ENCODE measurements at regions of chr15 and their contacts with region 1.

Region 1: GRCh38 chr15:75208501-75209288 is 7.0 kb downstream of the C15orf39 start:
- DNase-seq: no peak
- ATAC-seq: no peak
- H3K4me3 ChIP-seq: peak overlapping the region; percentile 60
- H3K27ac ChIP-seq: no peak overlapping the region
- H3K4me1 ChIP-seq: peaks cover 19% of the 10 kb centered on the region
- H3K27me3 ChIP-seq: no peaks in the 10 kb centered on the region
- CTCF ChIP-seq: no peak
- EP300 ChIP-seq: no peak
- POLR2A ChIP-seq: peak; percentile 73
- RAD21 ChIP-seq: no peak

Region 2: GRCh38 chr15:75029378-75030022 is 179.2 kb before region 1 on chr15:
- CTCF ChIA-PET with region 1: interaction called, 95 read pairs
- POLR2A ChIA-PET with region 1: interaction called, 7 read pairs
- RAD21 ChIA-PET with region 1: interaction called, 65 read pairs
- SMC1A ChIA-PET with region 1: interaction called, 49 read pairs
- in situ Hi-C with region 1: no loop called
- intact Hi-C with region 1: loop called (anchors 1 kb)
- DNase-seq: no peak
- ATAC-seq: peak; percentile 90
- H3K4me3 ChIP-seq: 0 out of 2 replicates have a peak overlapping the region, but pooled peaks have one; percentile 26
- H3K27ac ChIP-seq: peak overlapping the region; percentile 74
- H3K4me1 ChIP-seq: peaks cover 49% of the 10 kb centered on the region
- H3K27me3 ChIP-seq: no peaks in the 10 kb centered on the region
- CTCF ChIP-seq: peak; percentile 89 to 97 (median 92); a peak in 5 of 6 replicates
- EP300 ChIP-seq: no peak
- POLR2A ChIP-seq: no peak
- RAD21 ChIP-seq: peak; percentile 98

Region 3: DNA sequence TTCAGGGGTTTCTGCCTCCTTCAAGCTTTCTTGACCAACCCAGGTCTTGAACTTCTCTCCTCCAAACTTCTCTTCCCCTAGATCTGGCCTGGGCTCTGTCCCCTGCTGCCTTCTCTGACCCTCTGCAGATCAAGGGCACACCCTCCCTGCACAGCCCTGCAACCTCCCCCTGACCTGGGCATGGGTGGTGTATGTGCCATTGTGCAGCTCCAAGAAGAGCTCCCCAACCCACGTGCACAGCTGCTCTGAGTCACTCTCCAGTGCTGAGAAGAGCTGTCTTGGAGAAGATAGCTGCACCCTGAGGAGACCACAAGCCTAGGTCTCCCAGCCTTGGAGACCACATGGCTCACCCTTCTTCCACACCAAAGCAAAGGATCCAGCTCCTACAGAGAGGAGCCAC is 151.7 kb after region 1 on chr15:
- CTCF ChIA-PET with region 1: no interaction called
- POLR2A ChIA-PET with region 1: no interaction called
- RAD21 ChIA-PET with region 1: no interaction called
- SMC1A ChIA-PET with region 1: no interaction called
- in situ Hi-C with region 1: no loop called
- intact Hi-C with region 1: no loop called
- DNase-seq: no peak
- ATAC-seq: no peak
- H3K4me3 ChIP-seq: no peak overlapping the region
- H3K27ac ChIP-seq: no peak overlapping the region
- H3K4me1 ChIP-seq: no peaks in the 10 kb centered on the region
- H3K27me3 ChIP-seq: no peaks in the 10 kb centered on the region
- CTCF ChIP-seq: no peak
- EP300 ChIP-seq: no peak
- POLR2A ChIP-seq: no peak
- RAD21 ChIP-seq: no peak